Activated CD4-positive, alpha-beta T cell treated with anti-CD3 and anti-CD28 coated beads, Interleukin-2, amount 10 ng/mL, durations not matched to agents 24 days and 14 days (primary cell): ENCODE measurements at regions of chr17 and their contacts with region 1.

Region 1: GRCh38 chr17:80272366-80272765 is 11.7 kb downstream of the RNF213 start:
- DNase-seq: no peak
- H3K4me3 Mint-ChIP-seq: no peak overlapping the region
- H3K27ac Mint-ChIP-seq: peak overlapping the region; percentile 54
- H3K4me1 Mint-ChIP-seq: peaks cover 43% of the 10 kb centered on the region
- H3K27me3 Mint-ChIP-seq: no peaks in the 10 kb centered on the region

Region 2: GRCh38 chr17:80287806-80288567 is 15.6 kb after region 1 on chr17:
- intact Hi-C with region 1: loop called (anchors 2 kb)
- DNase-seq: no peak
- H3K4me3 Mint-ChIP-seq: no peak overlapping the region
- H3K27ac Mint-ChIP-seq: peak overlapping the region; percentile 64
- H3K4me1 Mint-ChIP-seq: peaks cover 5% of the 10 kb centered on the region
- H3K27me3 Mint-ChIP-seq: no peaks in the 10 kb centered on the region